ENCODE measurements at regions of chr14 and their contacts with region 1.

Region 1: DNA sequence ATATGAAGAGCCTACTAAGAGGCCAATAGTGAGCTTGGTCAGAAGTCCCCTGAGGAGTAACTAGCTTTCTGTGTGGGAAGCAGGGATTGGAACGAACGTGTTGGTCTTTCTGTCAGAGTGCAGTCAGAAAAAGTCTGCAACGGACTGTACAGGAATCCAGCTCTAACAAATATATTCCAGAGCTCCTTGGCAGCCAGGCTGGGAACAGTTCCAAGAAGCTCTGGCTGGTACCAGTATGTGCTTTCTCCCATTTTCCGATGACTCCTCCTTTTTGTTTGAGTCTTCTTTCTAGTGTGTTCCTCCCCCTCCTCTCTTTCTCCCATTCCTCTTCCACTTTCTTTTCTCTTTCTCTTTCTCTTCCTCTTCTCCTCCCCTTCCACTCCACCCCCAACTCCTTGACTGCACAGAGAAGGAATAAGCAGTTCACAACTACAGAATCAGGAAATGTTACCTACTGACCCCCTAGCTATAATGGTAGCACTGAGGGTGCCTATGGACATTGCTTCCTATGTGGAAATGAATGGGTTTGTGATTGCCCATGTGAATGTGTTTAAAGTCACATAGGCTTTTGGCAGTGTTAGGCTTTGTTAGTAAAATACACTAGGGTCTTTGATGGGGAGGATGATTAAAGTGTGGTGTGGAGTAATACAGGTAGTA is 59.9 kb downstream of the TTLL5 start:
- DNase-seq: no peak
- H3K4me3 Mint-ChIP-seq: no peak overlapping the region
- H3K27ac Mint-ChIP-seq: no peak overlapping the region
- H3K4me1 Mint-ChIP-seq: peaks cover 4% of the 10 kb centered on the region
- H3K27me3 Mint-ChIP-seq: no peaks in the 10 kb centered on the region

Region 2: GRCh38 chr14:75709207-75709812 is 11.7 kb before region 1 on chr14:
- CTCF ChIA-PET with region 1: interaction called, 10 read pairs
- intact Hi-C with region 1: no loop called
- DNase-seq: peak; percentile 80
- H3K4me3 Mint-ChIP-seq: no peak overlapping the region
- H3K27ac Mint-ChIP-seq: no peak overlapping the region
- H3K4me1 Mint-ChIP-seq: no peaks in the 10 kb centered on the region
- H3K27me3 Mint-ChIP-seq: no peaks in the 10 kb centered on the region

Measured in activated naive CD4-positive, alpha-beta T cell treated with anti-CD3 and anti-CD28 coated beads for 36 hours (primary cell).